ENCODE measurements at regions of chr15 and their contacts with region 1.

Region 1: DNA sequence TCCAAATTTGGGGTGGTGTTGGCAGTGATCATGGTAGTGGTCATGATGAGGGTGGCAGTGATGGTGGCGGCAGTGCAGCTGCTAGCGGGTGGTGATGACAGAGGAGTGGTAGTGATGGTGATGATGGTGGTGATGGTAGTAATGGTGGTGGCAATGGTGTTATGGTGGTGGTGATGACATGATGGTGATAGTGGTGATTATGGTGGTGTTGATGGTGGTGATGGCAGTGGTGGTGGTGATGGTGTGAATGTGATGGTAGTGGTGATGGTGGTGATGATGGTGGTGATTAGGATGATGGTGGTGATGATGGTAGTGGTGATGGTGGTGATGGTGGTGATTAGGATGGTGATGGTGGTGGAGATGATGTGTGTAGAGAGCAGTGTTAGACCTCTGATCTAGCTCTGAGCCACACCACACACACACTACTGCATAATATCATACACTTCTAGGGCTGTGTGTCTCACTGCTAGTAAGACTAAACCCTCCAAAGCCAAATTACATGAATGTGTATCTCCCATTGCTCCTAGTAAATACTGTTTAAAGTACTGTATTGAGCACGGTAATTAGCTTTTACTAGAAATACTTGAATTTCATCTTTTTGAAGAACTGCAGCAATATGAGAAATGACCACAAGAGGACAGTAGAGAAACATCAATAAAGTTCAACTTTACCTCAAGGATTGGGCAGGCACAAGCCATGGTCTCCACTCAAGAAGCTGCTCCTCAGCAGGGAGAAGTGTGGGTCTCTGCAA is 28.8 kb downstream of the TMED3 start:
- DNase-seq: peak; percentile 21
- H3K4me3 ChIP-seq: no peak overlapping the region
- CTCF ChIP-seq: peak; percentile 74

Region 2: GRCh38 chr15:79329171-79329611 is 10.5 kb before region 1 on chr15:
- CTCF ChIA-PET with region 1: interaction called, 76 read pairs
- POLR2A ChIA-PET with region 1: no interaction called
- DNase-seq: no peak
- H3K4me3 ChIP-seq: no peak overlapping the region
- CTCF ChIP-seq: no peak

Region 3: DNA sequence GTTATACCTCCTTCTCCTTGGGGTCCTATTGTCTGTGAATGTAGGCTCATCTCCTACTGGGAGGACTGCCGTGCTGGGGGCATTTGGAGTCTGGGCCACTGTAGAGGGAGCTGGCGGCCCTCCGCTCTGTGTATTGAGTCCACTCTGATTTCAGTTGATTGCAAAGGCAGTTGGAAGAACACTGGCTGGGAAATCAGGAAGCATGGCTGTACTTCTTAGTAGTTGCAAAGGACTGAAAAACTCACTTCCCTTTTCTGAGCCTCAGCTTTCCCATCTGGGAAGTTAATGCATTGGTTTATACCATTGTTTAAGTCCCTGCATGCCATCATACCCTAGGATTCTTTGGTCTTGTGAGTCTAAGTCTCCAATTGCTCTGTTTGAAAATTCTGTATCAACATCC is 17.8 kb after region 1 on chr15:
- CTCF ChIA-PET with region 1: interaction called, 31 read pairs
- POLR2A ChIA-PET with region 1: no interaction called
- DNase-seq: no peak
- H3K4me3 ChIP-seq: no peak overlapping the region
- CTCF ChIP-seq: no peak

Region 4: DNA sequence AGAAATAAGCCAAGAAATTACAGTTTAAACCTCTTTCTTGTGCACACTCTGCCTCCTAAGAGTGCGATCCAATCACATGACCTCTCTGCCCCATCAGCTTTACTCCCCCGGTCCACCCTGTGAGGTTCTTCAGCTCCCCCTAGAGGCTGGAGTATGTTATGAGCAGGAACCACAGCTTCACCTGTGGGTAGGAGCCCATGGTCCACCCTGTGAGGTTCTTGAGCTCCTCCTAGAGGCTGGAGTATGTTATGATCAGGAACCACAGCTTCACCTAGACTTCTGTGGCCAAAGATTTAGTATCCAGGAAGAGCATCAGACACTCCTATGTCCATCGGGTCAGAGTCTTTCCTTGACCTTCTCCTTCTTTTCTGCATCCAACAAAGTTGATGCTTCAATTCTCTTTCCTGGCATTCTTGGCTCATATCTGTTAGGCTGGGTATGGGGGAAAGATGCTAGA is 256.3 kb after region 1 on chr15:
- CTCF ChIA-PET with region 1: interaction called, 22 read pairs
- POLR2A ChIA-PET with region 1: no interaction called
- DNase-seq: no peak
- H3K4me3 ChIP-seq: no peak overlapping the region
- CTCF ChIP-seq: peak; percentile 66

Region 5: GRCh38 chr15:79844221-79844620 is 504.5 kb after region 1 on chr15:
- CTCF ChIA-PET with region 1: interaction called, 482 read pairs
- POLR2A ChIA-PET with region 1: no interaction called
- DNase-seq: no peak
- H3K4me3 ChIP-seq: no peak overlapping the region
- CTCF ChIP-seq: no peak

Region 6: GRCh38 chr15:79994615-79995014 is 654.9 kb after region 1 on chr15:
- CTCF ChIA-PET with region 1: interaction called, 34 read pairs
- POLR2A ChIA-PET with region 1: no interaction called
- DNase-seq: no peak
- H3K4me3 ChIP-seq: no peak overlapping the region
- CTCF ChIP-seq: no peak

Measured in AG04449 (cell line).